Posterior cingulate gyrus (tissue), 11 donors: ENCODE measurements at regions of chr3 and their contacts with region 1.

Region 1: GRCh38 chr3:47164007-47164881 is at the start of gene SETD2:
- DNase-seq: peak; percentile 84 to 98 (median 92)

Region 2: DNA sequence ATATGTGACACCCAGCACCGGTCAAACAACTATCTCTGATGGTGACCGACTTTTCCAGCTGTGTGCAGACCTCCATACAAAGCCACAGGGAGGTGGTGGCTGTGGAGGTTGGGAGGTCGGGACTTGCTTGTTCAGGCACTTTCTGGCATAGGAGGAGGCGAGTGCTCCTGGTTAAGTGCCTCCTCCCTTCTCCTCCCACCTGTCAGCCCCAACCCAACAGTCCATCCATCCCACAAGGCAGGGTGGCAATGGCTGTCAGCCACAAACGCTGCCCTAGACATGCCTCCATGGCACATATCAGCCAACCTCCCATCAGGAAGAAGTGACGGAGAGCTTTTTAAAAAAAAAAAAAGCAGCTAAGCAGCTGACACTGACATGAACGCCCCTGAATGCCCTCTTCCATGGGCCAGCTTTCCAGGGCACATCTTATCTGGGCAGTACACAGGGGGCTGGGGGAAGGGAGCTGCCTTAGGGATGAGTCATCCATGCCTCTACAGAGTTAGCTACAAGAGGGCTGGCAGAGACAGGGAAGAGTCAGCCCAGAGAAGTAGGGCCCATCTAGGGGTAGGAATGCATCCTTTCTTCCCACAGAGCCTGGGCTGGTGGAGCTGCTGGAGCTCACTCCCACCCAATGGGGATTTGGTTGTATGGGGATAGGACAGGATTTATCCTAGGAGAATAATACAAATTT is 228.9 kb before region 1 on chr3:
- intact Hi-C with region 1: loop called (anchors 10 kb)
- DNase-seq: peak in 4 of 10 donors; percentile 31 to 76 (median 51)

Region 3: DNA sequence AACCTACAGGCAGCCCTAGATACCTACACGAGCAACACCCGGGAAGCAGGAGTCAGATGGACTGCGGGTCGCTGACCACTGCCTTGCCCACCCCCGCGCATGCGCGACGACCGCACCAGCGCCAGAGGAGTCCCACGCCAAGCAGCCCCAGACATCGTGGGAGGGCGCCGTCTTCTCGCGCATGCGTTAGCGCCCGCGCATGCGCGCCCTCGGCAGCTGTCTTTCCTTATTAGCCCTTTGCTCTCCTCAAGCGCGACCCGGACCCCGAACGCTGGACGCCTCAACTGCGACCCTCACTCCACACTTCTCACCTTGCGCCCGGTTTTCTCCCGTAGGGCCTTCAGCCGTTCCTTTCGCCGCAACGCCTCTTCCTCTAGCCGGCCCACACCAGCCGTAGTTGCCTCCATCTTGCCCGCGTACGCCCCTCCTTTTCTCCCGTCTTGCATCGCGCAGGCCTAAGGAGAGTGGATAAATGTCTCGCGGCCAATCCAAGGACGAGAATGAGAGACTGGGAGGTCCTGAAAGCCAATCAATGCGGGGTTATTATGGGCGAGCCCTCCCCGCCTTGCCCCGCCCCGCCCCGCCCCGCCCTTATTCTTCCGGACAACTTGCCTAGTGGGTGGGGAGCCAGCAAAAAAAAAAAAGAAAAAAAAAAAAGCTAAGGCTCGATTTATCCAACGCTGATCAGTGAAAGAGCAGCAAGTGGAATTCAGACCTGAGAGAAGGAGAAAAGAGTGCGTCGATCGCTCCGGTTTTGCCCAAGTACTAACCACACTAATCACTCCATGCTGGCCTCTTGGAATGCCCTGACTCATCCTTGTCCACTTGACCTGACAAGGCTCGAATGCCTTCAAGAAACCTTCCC is 187.7 kb before region 1 on chr3 and contains the start of gene CCDC12:
- intact Hi-C with region 1: loop called (anchors 2 kb)
- DNase-seq: peak; percentile 91 to 99 (median 96)

Region 4: DNA sequence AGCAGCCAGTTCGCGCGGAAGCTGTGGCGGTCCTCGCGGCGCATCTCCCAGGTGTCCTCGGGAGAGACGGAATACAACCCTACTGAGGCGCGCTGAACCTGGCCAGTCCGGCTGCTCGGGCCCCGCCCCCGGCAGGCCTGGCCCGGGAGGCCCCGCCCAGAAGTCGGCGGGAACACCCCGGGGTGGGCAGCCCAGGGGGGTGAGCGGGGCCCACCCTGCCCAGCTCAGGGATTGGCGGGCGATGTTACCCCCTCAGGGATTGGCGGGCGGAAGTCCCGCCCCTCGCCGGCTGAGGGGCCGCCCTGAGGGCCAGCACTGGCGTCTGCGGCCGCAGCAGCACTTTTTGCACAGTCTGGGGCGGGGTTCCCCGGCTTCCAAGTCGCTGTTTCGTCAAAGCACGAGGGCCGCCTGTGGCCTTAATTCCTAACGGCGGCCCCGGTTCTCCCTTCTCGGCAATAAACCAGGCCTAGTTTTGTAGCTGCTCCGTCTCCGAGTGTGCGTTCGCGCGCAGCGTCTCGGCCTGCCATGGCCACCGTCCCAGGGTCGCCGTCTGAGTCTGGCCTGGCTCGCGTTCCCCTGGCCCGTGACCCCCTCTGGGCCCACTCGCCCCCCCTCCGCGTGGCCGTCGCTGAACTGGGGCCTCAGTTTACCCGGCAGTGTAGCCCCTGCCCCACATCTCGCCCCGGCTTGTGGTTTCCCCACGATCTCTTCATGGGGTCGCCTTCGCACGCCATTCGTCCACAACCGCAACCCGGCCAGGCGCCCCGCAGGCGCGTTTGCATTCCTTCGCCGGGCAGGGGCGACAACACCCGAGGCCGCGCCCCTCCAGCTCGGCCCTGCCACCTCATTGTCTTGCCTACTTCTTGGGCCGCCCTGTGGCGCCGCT is 154.8 kb before region 1 on chr3:
- intact Hi-C with region 1: loop called (anchors 1 kb)
- DNase-seq: peak; percentile 79 to 99 (median 90)

Region 5: DNA sequence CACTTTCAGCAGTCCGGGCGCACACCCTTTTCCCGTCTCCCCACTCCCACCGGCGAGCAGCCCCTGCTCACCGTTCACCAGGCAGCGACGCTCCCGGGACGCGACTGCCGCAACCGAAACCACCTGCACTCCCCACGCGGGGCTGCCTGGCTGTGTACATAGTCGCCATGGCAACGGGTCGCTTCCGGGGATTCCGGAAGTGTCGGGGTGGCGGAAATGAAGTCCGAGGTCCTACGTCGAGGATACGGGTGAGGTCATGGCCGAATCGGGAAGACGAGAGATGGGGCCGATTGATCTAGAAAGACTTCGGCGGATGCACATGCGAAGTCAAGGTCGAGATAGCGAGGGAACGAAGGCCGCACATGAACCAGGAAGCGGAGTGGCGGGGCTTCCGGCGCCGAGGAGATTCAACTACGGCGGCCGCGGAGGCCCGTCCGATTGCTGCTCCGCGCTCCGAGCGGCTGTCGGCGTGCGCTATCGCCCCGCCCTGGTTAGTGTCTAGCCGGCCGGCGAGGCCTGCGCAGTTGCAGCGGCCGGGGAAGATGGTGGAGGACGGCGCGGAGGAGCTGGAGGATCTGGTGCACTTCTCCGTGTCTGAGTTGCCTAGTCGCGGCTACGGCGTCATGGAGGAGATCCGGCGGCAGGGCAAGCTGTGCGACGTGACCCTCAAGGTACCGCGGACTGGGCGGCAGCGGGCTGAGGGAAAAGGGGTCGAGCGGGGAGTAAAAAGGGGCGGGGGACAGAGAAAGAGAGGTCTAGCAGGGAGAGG is 118.4 kb after region 1 on chr3 and contains the starts of genes KIF9 and KLHL18:
- intact Hi-C with region 1: loop called (anchors 1 kb)
- DNase-seq: peak; percentile 88 to 98 (median 93)

Region 6: GRCh38 chr3:47380601-47381316 is 216.5 kb after region 1 on chr3 and contains the start of gene PTPN23:
- intact Hi-C with region 1: loop called (anchors 5 kb)
- DNase-seq: peak; percentile 97 to 100 (median 98)